ENCODE measurements at regions of chr3 and their contacts with region 1.

Region 1: DNA sequence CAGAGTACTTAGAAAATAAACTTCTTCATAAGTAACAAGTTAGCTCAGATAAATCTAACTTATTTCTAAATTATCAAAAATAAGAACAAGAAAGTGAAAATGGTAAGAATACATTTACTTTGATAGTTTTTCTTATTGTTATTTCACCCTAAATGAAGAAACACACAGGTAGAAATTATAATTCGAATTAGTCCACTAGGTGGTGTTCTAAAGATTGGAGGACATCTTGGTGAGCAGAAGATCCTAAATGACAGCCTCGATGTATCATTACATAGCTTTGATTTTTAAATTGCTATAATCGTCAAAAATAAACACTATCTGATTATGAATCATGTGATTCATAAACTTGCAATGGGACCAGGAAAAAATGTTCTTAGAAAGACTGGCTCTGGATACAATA is 280.8 kb upstream of the UBE2E2 start:
- DNase-seq: peak; percentile 71
- ATAC-seq: peak; percentile 43
- H3K4me3 ChIP-seq: no peak overlapping the region
- H3K27ac ChIP-seq: no peak overlapping the region
- H3K4me1 ChIP-seq: peaks cover 34% of the 10 kb centered on the region
- H3K27me3 ChIP-seq: no peaks in the 10 kb centered on the region
- CTCF ChIP-seq: peak; percentile 74

Region 2: DNA sequence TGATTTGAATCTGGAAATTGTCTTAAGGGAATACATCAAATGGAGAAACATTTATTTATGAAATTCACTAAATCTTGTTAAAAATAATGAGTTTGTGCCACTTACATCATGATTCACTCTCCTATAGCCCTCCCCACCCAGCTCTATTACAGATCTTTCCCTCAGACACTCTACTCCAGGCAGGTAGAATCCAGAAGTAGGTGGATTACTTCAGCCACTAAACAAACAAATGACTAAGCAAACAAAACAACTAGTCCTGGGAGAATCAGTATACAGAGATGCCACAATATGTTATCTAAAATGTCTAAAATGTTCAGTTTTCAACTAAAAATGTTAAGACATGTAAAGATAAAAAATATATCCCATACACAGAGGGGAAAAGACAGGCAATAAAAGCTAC is 327.3 kb before region 1 on chr3:
- CTCF ChIA-PET with region 1: no interaction called
- POLR2A ChIA-PET with region 1: no interaction called
- intact Hi-C with region 1: no loop called
- DNase-seq: peak; percentile 71
- ATAC-seq: peak; percentile 95
- H3K4me3 ChIP-seq: no peak overlapping the region
- H3K27ac ChIP-seq: no peak overlapping the region
- H3K4me1 ChIP-seq: peaks cover 16% of the 10 kb centered on the region; the same call in 1 of the 2 replicates
- H3K27me3 ChIP-seq: no peaks in the 10 kb centered on the region
- CTCF ChIP-seq: no peak

Region 3: DNA sequence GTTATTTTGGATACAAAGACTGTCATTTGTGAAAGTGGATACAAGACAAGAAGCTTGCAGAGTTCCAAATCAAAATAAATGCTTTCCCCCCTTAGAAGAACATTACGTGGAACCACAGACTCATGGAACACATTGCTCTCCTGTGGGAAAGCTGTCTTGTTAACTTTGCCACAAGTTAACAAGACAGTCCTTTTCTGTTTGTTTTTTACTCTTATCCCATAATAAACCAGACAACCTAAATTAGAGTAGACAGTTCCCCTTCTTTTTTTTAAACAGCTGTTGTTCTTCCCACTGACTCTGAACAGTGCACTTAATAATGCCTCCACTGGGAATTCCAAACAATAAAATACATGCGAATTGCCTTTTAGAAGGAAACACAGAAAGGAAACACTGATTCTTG is 25.5 kb after region 1 on chr3:
- CTCF ChIA-PET with region 1: no interaction called
- POLR2A ChIA-PET with region 1: no interaction called
- intact Hi-C with region 1: no loop called
- DNase-seq: no peak
- ATAC-seq: no peak
- H3K4me3 ChIP-seq: no peak overlapping the region
- H3K27ac ChIP-seq: no peak overlapping the region
- H3K4me1 ChIP-seq: no peaks in the 10 kb centered on the region
- H3K27me3 ChIP-seq: no peaks in the 10 kb centered on the region
- CTCF ChIP-seq: no peak

Region 4: GRCh38 chr3:22960105-22960984 is 38.0 kb after region 1 on chr3:
- CTCF ChIA-PET with region 1: interaction called, 4 read pairs
- POLR2A ChIA-PET with region 1: no interaction called
- intact Hi-C with region 1: loop called (anchors 1 kb)
- DNase-seq: peak; percentile 74
- ATAC-seq: peak; percentile 66
- H3K4me3 ChIP-seq: no peak overlapping the region
- H3K27ac ChIP-seq: no peak overlapping the region
- H3K4me1 ChIP-seq: no peaks in the 10 kb centered on the region
- H3K27me3 ChIP-seq: no peaks in the 10 kb centered on the region
- CTCF ChIP-seq: peak; percentile 92

Region 5: GRCh38 chr3:23113455-23114171 is 191.3 kb after region 1 on chr3:
- CTCF ChIA-PET with region 1: no interaction called
- POLR2A ChIA-PET with region 1: no interaction called
- intact Hi-C with region 1: loop called (anchors 5 kb)
- DNase-seq: peak; percentile 89
- ATAC-seq: peak; percentile 68
- H3K4me3 ChIP-seq: peak overlapping the region; percentile 33; the same call in 1 of the 2 replicates
- H3K27ac ChIP-seq: peak overlapping the region; percentile 64
- H3K4me1 ChIP-seq: peaks cover 44% of the 10 kb centered on the region
- H3K27me3 ChIP-seq: 0 out of 2 replicates have a peak, but pooled peaks cover under 1% of the 10 kb centered on the region
- CTCF ChIP-seq: no peak

Region 6: GRCh38 chr3:23161896-23162570 is 239.7 kb after region 1 on chr3:
- CTCF ChIA-PET with region 1: no interaction called
- POLR2A ChIA-PET with region 1: no interaction called
- intact Hi-C with region 1: loop called (anchors 5 kb)
- DNase-seq: peak; percentile 73
- ATAC-seq: peak; percentile 67
- H3K4me3 ChIP-seq: peak overlapping the region; percentile 38
- H3K27ac ChIP-seq: peak overlapping the region; percentile 37
- H3K4me1 ChIP-seq: peaks cover 43% of the 10 kb centered on the region
- H3K27me3 ChIP-seq: no peaks in the 10 kb centered on the region
- CTCF ChIP-seq: no peak

Region 7: DNA sequence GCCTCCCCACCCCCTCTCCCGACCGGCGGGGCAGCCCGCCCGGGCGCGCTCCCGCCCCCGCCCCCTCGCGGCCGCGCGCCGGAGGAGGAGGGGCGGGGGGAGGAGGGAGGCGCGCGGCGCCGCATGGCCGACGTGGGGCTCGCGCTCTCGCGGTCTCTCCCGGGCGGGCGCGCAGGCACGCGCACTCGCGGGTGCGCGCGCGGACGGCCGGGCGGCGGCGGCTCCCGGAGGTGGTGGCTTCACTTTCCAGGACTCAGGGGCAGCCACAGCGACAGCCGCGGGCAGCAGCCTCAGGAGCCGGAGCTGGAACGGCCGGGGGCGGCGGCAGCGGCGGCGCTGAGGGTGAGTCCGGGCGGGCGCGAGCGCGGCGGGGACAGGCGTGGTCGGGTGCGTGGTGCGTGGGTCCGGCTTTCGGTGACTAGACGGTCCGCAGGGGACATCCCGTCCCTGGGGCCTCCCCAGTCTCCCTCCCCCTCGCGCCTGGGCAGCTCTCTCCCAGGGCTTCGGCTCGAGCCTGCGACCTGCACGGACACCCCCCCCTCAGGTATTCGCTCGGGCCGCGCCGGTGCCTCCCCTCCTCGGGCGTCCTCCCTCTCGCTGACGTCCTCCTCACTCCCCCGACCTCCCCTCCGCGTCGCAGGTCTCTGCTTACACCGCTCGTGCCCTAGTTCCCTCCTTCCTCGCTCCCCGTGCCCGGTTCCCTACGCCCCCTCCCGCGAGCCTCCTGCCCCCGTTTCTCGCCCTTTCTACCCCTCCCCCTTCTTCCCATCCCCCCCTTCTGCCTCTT is 280.8 kb after region 1 on chr3 and contains the start of gene UBE2E2:
- CTCF ChIA-PET with region 1: no interaction called
- POLR2A ChIA-PET with region 1: no interaction called
- intact Hi-C with region 1: loop called (anchors 5 kb)
- DNase-seq: peak; percentile 82
- ATAC-seq: peak; percentile 72
- H3K4me3 ChIP-seq: peak within 1 kb of the TSS; percentile 100
- H3K27ac ChIP-seq: peak within 1 kb of the TSS; percentile 52
- H3K4me1 ChIP-seq: peaks cover 12% of the 10 kb centered on the region
- H3K27me3 ChIP-seq: no peaks in the 10 kb centered on the region
- CTCF ChIP-seq: no peak
- total RNA-seq, gene UBE2E2: 25.6 and 30.9 TPM in 2 replicates

Region 8: GRCh38 chr3:23270423-23270822 is 348.1 kb after region 1 on chr3:
- CTCF ChIA-PET with region 1: no interaction called
- POLR2A ChIA-PET with region 1: no interaction called
- intact Hi-C with region 1: loop called (anchors 5 kb)
- DNase-seq: no peak
- ATAC-seq: no peak
- H3K4me3 ChIP-seq: no peak overlapping the region
- H3K27ac ChIP-seq: no peak overlapping the region
- H3K4me1 ChIP-seq: peaks cover 14% of the 10 kb centered on the region
- H3K27me3 ChIP-seq: no peaks in the 10 kb centered on the region
- CTCF ChIP-seq: no peak